Naive thymus-derived CD4-positive, alpha-beta T cell (primary cell): ENCODE measurements at regions of chr1 and their contacts with region 1.

Region 1: DNA sequence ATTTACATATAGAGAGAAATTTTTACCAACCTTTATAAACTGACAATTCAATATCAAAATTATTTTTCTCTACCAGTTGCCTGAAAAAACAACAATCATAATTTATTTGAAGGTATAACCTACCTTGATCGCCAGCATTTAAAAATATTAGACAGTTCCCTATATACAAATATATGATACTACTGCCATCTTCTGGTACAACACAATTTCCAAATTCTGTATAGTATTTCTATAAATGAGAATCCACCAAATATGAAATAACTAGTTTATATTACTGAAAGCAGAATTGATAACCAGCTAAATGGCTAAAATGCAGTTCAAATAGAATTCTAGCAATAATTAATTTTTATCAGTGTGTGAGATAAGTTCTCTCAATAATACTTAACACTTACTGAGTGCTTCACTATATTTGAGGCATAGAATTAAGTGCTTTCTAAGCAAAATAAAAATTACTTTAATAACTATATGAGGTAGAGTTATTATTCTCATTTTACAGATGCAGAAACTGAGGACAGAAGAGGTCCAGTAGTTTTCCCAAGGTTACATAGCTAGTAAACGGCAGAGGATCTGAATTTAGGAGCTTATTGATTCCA is 75.6 kb downstream of the PIGK start:
- DNase-seq: peak in 4 of 9 donors; percentile 9 to 31 (median 18)
- ATAC-seq: no peak
- H3K4me3 ChIP-seq: no peak overlapping the region
- H3K4me3 Mint-ChIP-seq: no peak overlapping the region
- H3K27ac ChIP-seq: no peak overlapping the region
- H3K27ac Mint-ChIP-seq: no peak overlapping the region
- H3K4me1 ChIP-seq: peaks cover 0 to 3% of the 10 kb centered on the region in 2 donors
- H3K4me1 Mint-ChIP-seq: peaks cover 0 to 8% (median 6%) of the 10 kb centered on the region in 7 donors
- H3K27me3 ChIP-seq: no peaks in the 10 kb centered on the region
- H3K27me3 Mint-ChIP-seq: no peaks in the 10 kb centered on the region

Region 2: DNA sequence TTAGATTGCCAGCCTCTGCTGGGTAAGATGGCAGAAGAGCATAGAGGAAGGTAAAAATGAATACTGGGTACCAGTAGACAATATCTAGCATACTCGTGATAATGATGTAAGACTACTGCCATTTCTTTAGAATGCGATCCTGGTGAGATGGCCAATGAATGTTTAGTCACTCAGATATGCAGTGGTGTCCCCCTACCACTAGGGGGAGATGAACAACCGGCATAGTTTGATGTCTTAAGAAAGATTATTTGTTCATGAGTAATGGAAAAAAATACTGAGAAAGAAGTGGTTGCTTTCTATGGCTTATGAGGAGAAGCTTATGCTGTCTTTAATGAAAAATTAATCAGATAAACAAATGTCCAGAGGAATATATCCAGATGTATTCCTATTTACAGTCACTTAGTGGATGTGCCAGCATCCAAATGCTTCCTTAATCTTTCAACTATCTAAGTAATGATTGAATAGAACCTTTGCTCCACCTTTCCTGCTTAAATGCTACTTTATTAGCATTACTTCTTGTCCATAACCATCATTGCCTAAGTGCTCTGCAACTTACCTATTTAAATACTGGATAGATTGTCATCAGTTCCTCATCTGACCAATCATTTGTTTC is 812.5 kb before region 1 on chr1:
- CTCF ChIA-PET with region 1: no interaction called
- POLR2A ChIA-PET with region 1: no interaction called
- intact Hi-C with region 1: loop called in 1 of 2 experiments (anchors 1 kb)
- DNase-seq: peak in 7 of 9 donors; percentile 19 to 56 (median 51)
- ATAC-seq: peak; percentile 63
- H3K4me3 ChIP-seq: no peak overlapping the region
- H3K4me3 Mint-ChIP-seq: no peak overlapping the region
- H3K27ac ChIP-seq: no peak overlapping the region
- H3K27ac Mint-ChIP-seq: peak overlapping the region in 1 of 9 donors; percentile 16
- H3K4me1 ChIP-seq: no peaks in the 10 kb centered on the region
- H3K4me1 Mint-ChIP-seq: peaks cover 0 to 41% (median 14%) of the 10 kb centered on the region in 7 donors
- H3K27me3 ChIP-seq: no peaks in the 10 kb centered on the region
- H3K27me3 Mint-ChIP-seq: no peaks in the 10 kb centered on the region

Region 3: DNA sequence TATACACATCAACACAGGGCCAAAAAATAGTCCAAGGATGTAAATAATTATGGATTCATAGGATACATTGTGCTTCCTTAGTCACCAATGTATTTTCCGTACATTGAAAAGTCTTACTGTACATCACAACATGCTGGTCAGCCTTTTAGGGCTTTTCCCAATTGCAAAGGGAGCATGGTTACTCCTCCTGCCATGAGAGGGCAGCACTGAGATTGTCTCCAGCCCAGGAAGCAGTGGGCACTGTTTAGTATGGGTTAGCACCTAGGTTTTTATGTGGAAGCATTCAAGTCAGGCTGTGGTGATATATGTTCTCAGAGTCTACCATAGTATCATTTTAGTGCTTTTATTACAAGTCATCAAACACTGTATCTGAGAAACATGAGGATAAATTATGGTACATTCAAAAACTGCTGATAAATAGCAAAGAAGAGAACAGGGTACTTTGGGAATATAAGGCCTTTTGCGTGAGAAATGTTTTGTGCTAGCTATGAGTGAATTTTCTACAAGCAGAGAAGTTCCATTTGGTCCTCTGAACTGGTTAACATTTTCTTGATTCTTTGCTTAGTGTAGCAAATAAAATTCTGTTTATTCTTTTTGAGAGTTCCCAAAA is 242.4 kb before region 1 on chr1:
- CTCF ChIA-PET with region 1: no interaction called
- POLR2A ChIA-PET with region 1: no interaction called
- intact Hi-C with region 1: loop called (anchors 1 to 2 kb)
- DNase-seq: peak in 6 of 9 donors; percentile 4 to 41 (median 30)
- ATAC-seq: peak; percentile 53
- H3K4me3 ChIP-seq: no peak overlapping the region
- H3K4me3 Mint-ChIP-seq: no peak overlapping the region
- H3K27ac ChIP-seq: no peak overlapping the region
- H3K27ac Mint-ChIP-seq: no peak overlapping the region
- H3K4me1 ChIP-seq: no peaks in the 10 kb centered on the region
- H3K4me1 Mint-ChIP-seq: no peaks in the 10 kb centered on the region
- H3K27me3 ChIP-seq: no peaks in the 10 kb centered on the region
- H3K27me3 Mint-ChIP-seq: peaks cover 0 to 7% (median 0%) of the 10 kb centered on the region in 5 donors

Region 4: DNA sequence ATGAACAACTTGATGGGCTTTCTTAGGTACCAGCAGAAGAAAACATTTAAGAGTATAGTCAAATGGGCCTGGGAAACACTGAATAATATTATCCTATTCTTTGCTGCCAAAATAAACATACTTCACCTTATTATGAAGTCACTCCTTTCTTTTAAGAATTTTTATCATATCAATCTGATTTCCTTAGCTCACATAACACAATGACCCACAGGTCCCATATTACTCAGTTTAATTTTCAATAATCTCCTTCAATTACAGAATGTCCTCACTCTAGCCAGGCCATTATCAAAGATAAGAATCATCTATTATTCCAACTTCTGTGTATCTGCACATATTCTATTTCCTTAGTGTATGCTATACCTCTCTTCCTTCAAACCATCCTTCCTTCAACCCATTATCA is 12.6 kb after region 1 on chr1:
- CTCF ChIA-PET with region 1: no interaction called
- POLR2A ChIA-PET with region 1: no interaction called
- intact Hi-C with region 1: no loop called
- DNase-seq: no peak
- ATAC-seq: no peak
- H3K4me3 ChIP-seq: no peak overlapping the region
- H3K4me3 Mint-ChIP-seq: no peak overlapping the region
- H3K27ac ChIP-seq: no peak overlapping the region
- H3K27ac Mint-ChIP-seq: no peak overlapping the region
- H3K4me1 ChIP-seq: no peaks in the 10 kb centered on the region
- H3K4me1 Mint-ChIP-seq: peaks cover 0 to 23% (median 14%) of the 10 kb centered on the region in 7 donors
- H3K27me3 ChIP-seq: no peaks in the 10 kb centered on the region
- H3K27me3 Mint-ChIP-seq: no peaks in the 10 kb centered on the region

Region 5: DNA sequence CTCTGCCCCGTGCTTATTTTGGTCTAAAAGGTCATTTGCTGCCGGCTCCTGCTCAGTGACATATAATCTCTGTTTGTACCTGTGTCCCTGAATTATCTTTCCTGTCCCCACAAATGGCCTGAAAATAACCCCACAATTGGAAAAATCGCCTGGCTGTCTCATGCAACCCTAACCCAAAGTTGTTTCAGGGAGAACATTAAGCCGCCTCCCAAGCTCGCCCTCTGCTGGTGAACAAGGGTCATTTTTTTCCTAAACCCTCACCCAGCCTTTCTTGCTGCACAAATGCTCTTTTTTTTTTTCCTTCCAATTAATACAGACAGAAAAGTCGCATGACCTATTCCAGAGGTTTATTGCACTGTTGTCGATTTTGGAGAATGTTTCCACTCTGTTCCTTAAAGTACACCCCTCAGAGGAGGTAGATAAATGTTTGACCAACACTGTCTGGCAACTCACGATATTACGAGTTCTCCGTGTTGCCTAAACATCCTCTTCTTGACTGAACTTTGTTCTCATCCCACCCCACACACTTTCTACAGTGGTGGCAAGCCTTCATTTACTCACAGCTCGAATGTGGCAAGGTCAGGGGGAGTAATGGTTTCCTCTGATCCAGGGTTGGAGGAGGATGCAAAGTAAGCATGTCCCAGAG is 390.2 kb after region 1 on chr1:
- CTCF ChIA-PET with region 1: interaction called, 10 read pairs
- POLR2A ChIA-PET with region 1: no interaction called
- intact Hi-C with region 1: loop called (anchors 1 kb)
- DNase-seq: peak; percentile 34 to 75 (median 60)
- ATAC-seq: peak; percentile 71
- H3K4me3 ChIP-seq: no peak overlapping the region
- H3K4me3 Mint-ChIP-seq: peak overlapping the region in 6 of 10 donors; percentile 22 to 69 (median 50)
- H3K27ac ChIP-seq: no peak overlapping the region
- H3K27ac Mint-ChIP-seq: peak overlapping the region in 8 of 9 donors; percentile 16 to 94 (median 38)
- H3K4me1 ChIP-seq: peaks cover 0 to 4% of the 10 kb centered on the region in 2 donors
- H3K4me1 Mint-ChIP-seq: peaks cover 2 to 16% (median 10%) of the 10 kb centered on the region in 7 donors
- H3K27me3 ChIP-seq: no peaks in the 10 kb centered on the region
- H3K27me3 Mint-ChIP-seq: no peaks in the 10 kb centered on the region

Region 6: GRCh38 chr1:77779529-77780281 is 636.1 kb after region 1 on chr1 and contains the start of gene MIGA1:
- CTCF ChIA-PET with region 1: no interaction called
- POLR2A ChIA-PET with region 1: no interaction called
- intact Hi-C with region 1: no loop called
- DNase-seq: peak; percentile 61 to 92 (median 86)
- ATAC-seq: peak; percentile 99
- H3K4me3 ChIP-seq: peak within 1 kb of the TSS; percentile 68
- H3K4me3 Mint-ChIP-seq: peak within 1 kb of the TSS; percentile 90 to 98 (median 94)
- H3K27ac ChIP-seq: peak within 1 kb of the TSS; percentile 87
- H3K27ac Mint-ChIP-seq: peak within 1 kb of the TSS; percentile 88 to 96 (median 93)
- H3K4me1 ChIP-seq: peaks cover 11 to 15% of the 10 kb centered on the region in 2 donors
- H3K4me1 Mint-ChIP-seq: peaks cover 21 to 54% (median 49%) of the 10 kb centered on the region in 7 donors
- H3K27me3 ChIP-seq: no peaks in the 10 kb centered on the region
- H3K27me3 Mint-ChIP-seq: peaks cover 0 to 3% (median 0%) of the 10 kb centered on the region in 5 donors
- total RNA-seq, gene MIGA1: 12.1 to 23.5 (median 15.9) TPM